H1 (cell line): ENCODE measurements at regions of chr9 and their contacts with region 1.

Region 1: GRCh38 chr9:131517761-131518190 is 13.3 kb downstream of the UCK1 start:
- DNase-seq: no peak
- H3K4me3 ChIP-seq: no peak overlapping the region
- H3K27ac ChIP-seq: no peak overlapping the region
- H3K4me1 ChIP-seq: no peaks in the 10 kb centered on the region
- H3K27me3 ChIP-seq: no peaks in the 10 kb centered on the region
- CTCF ChIP-seq: no peak
- EP300 ChIP-seq: no peak
- POLR2A ChIP-seq: no peak
- RAD21 ChIP-seq: no peak

Region 2: DNA sequence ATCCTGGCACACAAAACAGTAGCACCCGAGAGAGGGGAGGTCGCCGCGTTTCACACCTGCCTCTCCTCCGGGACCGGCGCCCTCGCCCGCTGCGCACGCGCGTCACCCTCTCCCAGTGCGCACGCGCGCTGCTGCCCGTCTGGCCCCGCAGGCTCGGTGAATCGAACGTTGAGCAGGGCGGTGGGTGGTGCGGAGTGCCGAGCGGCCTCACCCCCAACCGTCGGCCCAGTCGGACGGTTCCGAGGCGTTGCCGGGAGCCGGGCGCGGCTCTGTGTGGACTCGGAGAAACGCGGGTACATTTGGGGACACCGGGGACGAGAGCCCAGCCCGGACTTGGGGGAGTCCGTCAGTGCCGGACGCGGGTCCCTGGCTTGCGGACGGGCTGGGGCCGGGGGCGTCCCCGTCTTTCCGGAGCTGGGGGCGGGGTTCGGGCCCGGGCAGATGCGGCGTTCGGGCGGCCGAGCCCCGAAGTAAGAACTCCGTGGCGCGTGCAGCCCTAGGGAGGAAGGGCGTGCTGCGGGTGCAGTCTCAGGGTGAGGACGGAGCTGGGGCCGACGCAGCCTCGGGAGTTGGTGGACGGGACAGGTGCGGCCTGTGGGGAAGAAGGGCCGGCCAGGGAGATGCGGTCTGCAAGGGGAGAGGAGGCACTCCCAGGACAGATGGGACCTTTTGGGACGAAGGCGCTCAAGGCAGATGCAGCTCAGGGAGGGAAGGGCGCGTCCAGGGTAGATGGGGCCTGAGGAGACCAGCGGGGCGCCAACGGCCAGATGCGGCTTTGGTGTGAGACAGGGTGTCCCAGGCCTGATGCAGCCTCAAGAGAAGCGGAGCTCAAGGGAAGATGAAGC is 14.8 kb before region 1 on chr9 and contains the start of gene POMT1:
- CTCF ChIA-PET with region 1: interaction called, 4 read pairs
- POLR2A ChIA-PET with region 1: interaction called, 15 read pairs
- DNase-seq: peak; percentile 54 to 93
- H3K4me3 ChIP-seq: peak within 1 kb of the TSS; percentile 70 to 89 (median 80)
- H3K27ac ChIP-seq: no peak within 1 kb of the TSS
- H3K4me1 ChIP-seq: peaks cover 0 to 9% (median 5%) of the 10 kb centered on the region in 4 experiments; a peak in 4 of 7 replicates
- H3K27me3 ChIP-seq: peaks cover 0 to 8% (median 0%) of the 10 kb centered on the region in 4 experiments; a peak in 2 of 7 replicates
- CTCF ChIP-seq: no peak
- EP300 ChIP-seq: no peak
- POLR2A ChIP-seq: peak in 1 of 2 experiments; percentile 42; a peak in 1 of 3 replicates
- RAD21 ChIP-seq: no peak
- total RNA-seq, gene POMT1: 22.3 and 25.7 TPM in 2 replicates

Region 3: GRCh38 chr9:131530278-131530919 is 12.6 kb after region 1 on chr9:
- CTCF ChIA-PET with region 1: interaction called, 4 read pairs
- POLR2A ChIA-PET with region 1: interaction called, 22 read pairs
- DNase-seq: peak in 1 of 2 experiments; percentile 68
- H3K4me3 ChIP-seq: peak overlapping the region; percentile 65 to 92 (median 72)
- H3K27ac ChIP-seq: no peak overlapping the region; the same call in 1 of the 2 replicates
- H3K4me1 ChIP-seq: peaks cover 0 to 8% (median 4%) of the 10 kb centered on the region in 4 experiments; a peak in 6 of 7 replicates
- H3K27me3 ChIP-seq: no peaks in the 10 kb centered on the region
- CTCF ChIP-seq: 0 out of 4 replicates have a peak, but pooled peaks of 1 of the 3 experiments have one; percentile 2
- EP300 ChIP-seq: no peak
- POLR2A ChIP-seq: no peak
- RAD21 ChIP-seq: no peak; a peak in 1 of 4 replicates

Region 4: GRCh38 chr9:131567910-131568309 is 50.1 kb after region 1 on chr9:
- CTCF ChIA-PET with region 1: no interaction called
- POLR2A ChIA-PET with region 1: no interaction called
- DNase-seq: no peak
- H3K4me3 ChIP-seq: no peak overlapping the region
- H3K27ac ChIP-seq: no peak overlapping the region
- H3K4me1 ChIP-seq: no peaks in the 10 kb centered on the region
- H3K27me3 ChIP-seq: no peaks in the 10 kb centered on the region
- CTCF ChIP-seq: no peak
- EP300 ChIP-seq: no peak
- POLR2A ChIP-seq: no peak
- RAD21 ChIP-seq: no peak